Psoas muscle (tissue), 8 donors: ENCODE measurements at regions of chr2 and their contacts with region 1.

Region 1: GRCh38 chr2:189762551-189763298 is at the start of gene OSGEPL1:
- DNase-seq: peak; percentile 92 to 95
- ATAC-seq: peak; percentile 96 to 98 (median 97)
- H3K4me3 ChIP-seq: peak within 1 kb of the TSS; percentile 95
- H3K27ac ChIP-seq: peak within 1 kb of the TSS; percentile 93
- H3K4me1 ChIP-seq: peaks cover 16% of the 10 kb centered on the region
- H3K27me3 ChIP-seq: no peaks in the 10 kb centered on the region
- CTCF ChIP-seq: peak; percentile 50
- total RNA-seq, gene OSGEPL1: 3.4 to 5.9 (median 4.5) TPM

Region 2: DNA sequence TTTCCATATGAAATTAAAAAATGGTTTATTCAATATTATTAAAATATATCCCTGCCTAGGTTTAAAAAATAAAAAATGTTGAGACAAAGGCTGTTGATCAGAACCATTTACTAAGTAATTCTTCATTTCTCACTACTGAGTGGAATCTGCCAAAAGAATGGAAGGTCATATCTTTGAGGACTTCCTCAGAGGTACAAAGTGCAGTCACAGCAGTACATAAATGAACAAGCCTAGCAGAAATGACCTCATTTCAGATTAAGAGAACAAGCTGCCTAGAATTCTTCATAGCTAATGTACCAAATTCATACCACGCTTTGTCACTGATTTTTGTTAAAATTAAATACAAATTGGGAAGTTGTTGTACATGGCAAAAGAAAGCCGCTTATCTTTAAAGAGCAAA is 1889.6 kb before region 1 on chr2:
- intact Hi-C with region 1: loop called in 1 of 2 experiments (anchors 5 kb)
- DNase-seq: no peak
- ATAC-seq: no peak
- H3K4me3 ChIP-seq: no peak overlapping the region
- H3K27ac ChIP-seq: no peak overlapping the region
- H3K4me1 ChIP-seq: no peaks in the 10 kb centered on the region
- H3K27me3 ChIP-seq: peaks cover 0 to 2% (median 0%) of the 10 kb centered on the region in 3 donors
- CTCF ChIP-seq: no peak

Region 3: GRCh38 chr2:189661148-189661956 is 101.4 kb before region 1 on chr2 and contains the start of gene ASNSD1:
- intact Hi-C with region 1: loop called in 1 of 2 experiments (anchors 5 kb)
- DNase-seq: peak; percentile 99 to 100
- ATAC-seq: peak; percentile 98 to 99 (median 99)
- H3K4me3 ChIP-seq: peak within 1 kb of the TSS; percentile 88
- H3K27ac ChIP-seq: peak within 1 kb of the TSS; percentile 93
- H3K4me1 ChIP-seq: peaks cover 20% of the 10 kb centered on the region
- H3K27me3 ChIP-seq: no peaks in the 10 kb centered on the region
- CTCF ChIP-seq: peak; percentile 97
- total RNA-seq, gene ASNSD1: 50.8 to 67.0 (median 62.0) TPM

Region 4: GRCh38 chr2:189674374-189675112 is 88.2 kb before region 1 on chr2 and contains the start of gene ANKAR:
- intact Hi-C with region 1: loop called in 1 of 2 experiments (anchors 10 kb)
- DNase-seq: peak; percentile 92 to 96
- ATAC-seq: peak; percentile 98 to 99 (median 98)
- H3K4me3 ChIP-seq: peak within 1 kb of the TSS; percentile 84
- H3K27ac ChIP-seq: peak within 1 kb of the TSS; percentile 91
- H3K4me1 ChIP-seq: peaks cover 10% of the 10 kb centered on the region
- H3K27me3 ChIP-seq: no peaks in the 10 kb centered on the region
- CTCF ChIP-seq: peak; percentile 86
- total RNA-seq, gene ANKAR: 4.1 to 8.7 (median 6.0) TPM

Region 5: DNA sequence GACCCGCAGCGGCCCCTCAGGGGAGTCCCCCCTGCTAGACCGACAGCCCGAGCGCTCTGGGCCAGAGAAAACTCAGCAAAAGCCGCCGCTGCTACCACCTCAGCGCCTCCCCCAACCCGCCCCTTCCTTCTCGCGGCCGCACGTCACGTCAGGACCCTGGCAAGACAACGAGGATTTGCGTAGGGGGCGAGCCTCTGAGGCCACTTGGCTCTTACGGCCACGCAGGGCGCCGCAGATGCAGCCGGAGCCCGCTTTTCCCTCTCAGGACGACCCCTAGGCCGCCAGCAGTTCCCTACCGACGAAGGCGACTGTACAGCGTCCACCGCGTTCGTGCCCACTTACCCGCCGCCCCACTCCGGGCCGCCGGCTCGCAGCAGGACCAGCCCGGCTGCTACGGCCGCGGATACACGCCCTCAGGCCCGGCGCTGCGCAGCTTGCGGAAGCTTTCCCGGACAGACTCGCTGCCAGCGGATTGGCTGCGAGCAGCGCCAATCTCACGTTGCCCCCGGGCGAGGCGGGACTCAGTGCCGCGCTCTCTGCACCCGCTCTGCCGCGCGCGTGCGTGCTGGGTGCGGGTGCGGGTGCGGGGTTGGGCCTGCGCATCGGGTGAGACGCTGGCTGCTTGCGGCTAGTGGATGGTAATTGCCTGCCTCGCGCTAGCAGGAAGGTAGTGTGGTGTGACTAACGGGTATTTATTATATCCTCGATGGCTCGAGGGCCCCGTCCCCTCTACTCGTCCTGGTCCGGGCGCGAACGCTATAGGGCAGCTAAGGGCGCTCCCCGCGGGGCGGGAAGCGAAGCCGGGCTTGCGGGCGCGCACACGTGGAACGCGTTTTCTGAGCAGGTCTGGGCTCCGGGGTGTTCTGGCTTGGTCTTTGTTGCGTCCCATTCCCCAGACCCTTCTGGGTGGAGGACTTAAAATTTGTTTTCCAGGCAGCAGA is 21.5 kb after region 1 on chr2 and contains the starts of genes ORMDL1 and PMS1:
- intact Hi-C with region 1: loop called in 1 of 2 experiments (anchors 2 kb)
- DNase-seq: peak; percentile 97 to 98
- ATAC-seq: peak; percentile 97 to 99 (median 98)
- H3K4me3 ChIP-seq: peak within 1 kb of the TSS; percentile 73
- H3K27ac ChIP-seq: peak within 1 kb of the TSS; percentile 98
- H3K4me1 ChIP-seq: peaks cover 27% of the 10 kb centered on the region
- H3K27me3 ChIP-seq: no peaks in the 10 kb centered on the region
- CTCF ChIP-seq: no peak
- total RNA-seq, gene ORMDL1: 18.7 to 22.2 (median 20.1) TPM
- total RNA-seq, gene PMS1: 8.7 to 20.3 (median 11.6) TPM

Region 6: GRCh38 chr2:189951791-189952535 is 189.2 kb after region 1 on chr2:
- intact Hi-C with region 1: no loop called
- DNase-seq: no peak
- ATAC-seq: no peak
- H3K4me3 ChIP-seq: no peak overlapping the region
- H3K27ac ChIP-seq: no peak overlapping the region
- H3K4me1 ChIP-seq: no peaks in the 10 kb centered on the region
- H3K27me3 ChIP-seq: no peaks in the 10 kb centered on the region
- CTCF ChIP-seq: no peak